ENCODE measurements at regions of chr15 and their contacts with region 1.

Region 1: DNA sequence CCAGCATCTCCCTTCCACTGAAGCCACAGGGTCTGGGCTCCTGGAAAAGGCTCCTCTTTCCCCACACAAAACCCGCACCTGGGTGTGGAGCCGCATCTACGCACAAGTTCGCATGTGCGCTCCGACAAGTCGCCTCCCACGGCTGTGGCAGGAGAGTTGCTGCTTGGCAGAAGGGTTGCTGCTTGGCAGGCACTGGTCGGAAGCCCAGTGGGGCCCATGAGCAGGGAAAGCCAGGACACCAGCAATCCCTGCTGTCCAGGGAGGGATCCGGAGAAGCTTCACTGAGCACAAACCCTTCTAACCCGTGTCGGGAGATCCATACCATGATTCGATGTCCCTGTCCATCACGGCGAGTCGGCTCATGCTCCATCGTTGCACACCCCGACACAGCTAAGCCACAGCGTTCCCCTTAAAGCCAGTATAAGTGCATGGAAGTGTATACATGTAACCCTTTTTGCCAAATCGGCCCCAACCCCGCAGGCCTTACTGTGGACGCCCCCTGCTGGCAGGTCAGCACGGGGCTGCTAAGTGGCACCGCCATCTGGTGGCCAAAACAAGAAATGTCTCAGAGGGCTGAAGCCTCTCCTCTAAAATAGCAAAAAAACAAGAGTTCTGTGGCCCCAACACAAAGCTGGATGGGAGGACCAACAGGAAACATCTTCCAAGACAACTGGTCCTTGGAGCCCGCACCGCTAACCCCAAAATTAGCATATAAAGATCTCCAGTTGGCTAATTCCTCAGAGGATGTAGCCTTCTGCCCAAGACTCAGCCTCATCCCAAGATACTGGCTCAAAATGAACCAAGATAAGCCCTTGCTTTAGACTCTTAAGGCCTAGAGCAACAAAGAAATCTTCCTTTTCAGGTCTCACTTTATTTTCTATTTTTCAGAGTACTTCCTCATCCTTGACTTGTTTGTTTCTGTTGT is 8.3 kb downstream of the ANKRD63 start:
- DNase-seq: peak; percentile 79 to 92 (median 84)
- H3K4me3 ChIP-seq: no peak overlapping the region
- H3K27ac ChIP-seq: no peak overlapping the region
- H3K4me1 ChIP-seq: no peaks in the 10 kb centered on the region
- H3K27me3 ChIP-seq: peaks cover 6% of the 10 kb centered on the region
- CTCF ChIP-seq: peak; percentile 100
- POLR2A ChIP-seq: no peak

Region 2: GRCh38 chr15:40044717-40045571 is 229.7 kb before region 1 on chr15:
- intact Hi-C with region 1: loop called (anchors 5 to 10 kb)
- DNase-seq: peak; percentile 86 to 94 (median 89)
- H3K4me3 ChIP-seq: no peak overlapping the region
- H3K27ac ChIP-seq: peak overlapping the region in 1 of 5 donors; percentile 19
- H3K4me1 ChIP-seq: peaks cover 23 to 40% of the 10 kb centered on the region in 2 donors
- H3K27me3 ChIP-seq: no peaks in the 10 kb centered on the region
- CTCF ChIP-seq: peak; percentile 72 to 95 (median 91)
- POLR2A ChIP-seq: no peak

Region 3: DNA sequence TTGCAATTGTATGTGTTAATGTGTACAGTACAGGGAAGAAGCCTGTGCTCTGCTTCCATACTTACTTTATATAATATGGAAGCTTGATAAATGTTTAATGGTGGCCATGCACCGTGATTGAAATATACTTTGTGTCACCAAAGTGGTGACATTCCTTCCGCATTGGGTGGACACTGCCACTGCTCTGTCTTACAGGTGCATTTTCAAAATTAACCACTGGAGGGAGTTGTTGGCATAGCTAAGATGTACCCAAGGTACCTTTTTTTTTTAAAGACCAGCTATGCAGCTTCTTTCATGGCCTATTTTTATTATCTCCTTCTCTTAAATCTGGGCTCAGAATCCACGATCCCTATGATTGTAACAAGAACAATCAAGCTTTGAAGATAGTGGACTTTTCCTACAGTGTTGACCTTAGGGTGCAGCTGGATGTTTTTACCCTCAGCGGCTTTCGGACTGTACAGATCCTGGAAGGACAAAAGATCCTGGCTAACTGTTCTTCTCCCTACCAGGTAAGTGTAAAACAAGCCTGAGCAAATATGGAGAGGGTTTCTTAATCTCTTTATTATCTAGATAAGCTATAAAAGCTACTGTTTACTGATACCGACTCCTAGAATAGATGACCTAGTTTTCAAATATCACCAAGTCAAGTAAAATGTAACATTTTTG is 57.3 kb before region 1 on chr15:
- intact Hi-C with region 1: loop called (anchors 1 to 5 kb)
- DNase-seq: peak; percentile 43 to 74 (median 65)
- H3K4me3 ChIP-seq: no peak overlapping the region
- H3K27ac ChIP-seq: peak overlapping the region in 4 of 5 donors; percentile 4 to 48 (median 26)
- H3K4me1 ChIP-seq: peaks cover 8 to 10% of the 10 kb centered on the region in 2 donors
- H3K27me3 ChIP-seq: no peaks in the 10 kb centered on the region
- CTCF ChIP-seq: peak; percentile 63 to 98 (median 91)
- POLR2A ChIP-seq: no peak

Region 4: DNA sequence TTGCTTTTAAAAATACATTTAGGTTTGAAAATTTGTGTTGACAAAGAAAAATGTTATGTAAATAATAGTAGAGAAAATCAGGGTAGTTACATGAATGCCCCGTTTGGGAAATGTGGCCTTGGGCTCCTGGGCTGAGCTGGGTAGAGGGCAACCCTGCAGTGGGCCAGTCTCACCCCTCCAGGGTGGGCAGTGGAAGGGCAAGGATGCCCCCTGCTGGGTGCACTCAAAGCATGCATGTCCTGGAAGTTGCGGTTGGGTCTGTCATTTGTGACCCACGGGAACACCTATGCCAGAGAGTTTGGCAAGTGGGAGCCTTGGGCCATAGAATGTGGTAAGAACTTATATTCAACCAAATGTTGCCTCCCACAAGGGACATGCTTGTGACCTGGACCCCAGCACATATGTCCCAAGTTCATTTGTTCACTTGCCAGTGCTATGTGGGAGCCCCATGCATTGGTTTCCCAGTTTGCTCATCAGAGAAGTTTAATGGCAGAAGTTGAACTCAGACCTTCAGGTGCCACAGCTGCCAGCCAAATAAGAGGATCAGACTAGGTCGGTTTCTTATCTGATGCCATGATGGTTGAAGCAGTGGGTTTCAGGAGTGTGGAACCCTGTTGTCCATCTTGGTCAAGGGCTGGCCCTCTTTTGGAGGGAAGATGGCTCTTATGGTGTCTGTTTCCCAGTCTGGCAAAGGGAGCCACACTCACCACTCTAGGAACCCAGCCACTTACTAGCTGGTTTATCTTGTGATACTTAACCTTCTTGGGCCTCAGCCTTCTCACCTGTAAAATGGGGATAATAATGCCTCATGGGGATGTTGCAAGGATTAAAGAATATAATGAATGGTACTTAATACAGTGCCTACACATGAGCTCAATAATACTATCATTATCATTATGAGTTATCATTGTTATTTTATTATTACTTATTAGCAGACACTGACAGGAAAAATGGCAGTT is 35.7 kb after region 1 on chr15:
- intact Hi-C with region 1: loop called in 1 of 2 experiments (anchors 5 kb)
- DNase-seq: peak in 6 of 7 donors; percentile 53 to 76 (median 59)
- H3K4me3 ChIP-seq: no peak overlapping the region
- H3K27ac ChIP-seq: no peak overlapping the region
- H3K4me1 ChIP-seq: peaks cover 2 to 7% of the 10 kb centered on the region in 2 donors
- H3K27me3 ChIP-seq: no peaks in the 10 kb centered on the region
- CTCF ChIP-seq: peak; percentile 42 to 74 (median 69)
- POLR2A ChIP-seq: no peak

Region 5: GRCh38 chr15:40582726-40583246 is 308.2 kb after region 1 on chr15:
- intact Hi-C with region 1: no loop called
- DNase-seq: peak; percentile 53 to 84 (median 70)
- H3K4me3 ChIP-seq: peak overlapping the region in 2 of 4 donors; percentile 19 to 45
- H3K27ac ChIP-seq: peak overlapping the region in 3 of 5 donors; percentile 41 to 59 (median 48)
- H3K4me1 ChIP-seq: no peaks in the 10 kb centered on the region
- H3K27me3 ChIP-seq: no peaks in the 10 kb centered on the region
- CTCF ChIP-seq: no peak
- POLR2A ChIP-seq: peak in 1 of 2 donors; percentile 8